Posterior vena cava (tissue), 2 donors: ENCODE measurements at regions of chr20 and their contacts with region 1.

Region 1: GRCh38 chr20:62330576-62331317 is 27.9 kb downstream of the ADRM1 start:
- DNase-seq: no peak

Region 2: DNA sequence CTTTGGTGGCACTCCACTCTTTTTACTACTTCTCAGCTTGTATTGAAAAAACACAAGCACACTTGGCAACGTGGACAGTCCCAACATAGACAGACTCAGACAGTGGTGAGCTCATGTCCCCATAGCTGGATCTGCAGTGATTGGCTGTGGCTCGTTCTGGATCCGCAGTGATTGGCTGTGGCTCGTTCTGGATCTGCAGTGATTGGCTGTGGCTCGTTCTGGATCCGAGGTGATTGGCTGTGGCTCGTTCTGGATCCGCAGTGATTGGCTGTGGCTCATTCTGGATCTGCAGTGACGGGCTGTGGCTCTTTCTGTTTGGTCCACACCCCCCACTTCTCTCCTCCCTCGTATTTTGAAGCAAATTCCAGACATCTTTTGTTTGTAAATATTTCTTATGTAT is 64.4 kb before region 1 on chr20:
- intact Hi-C with region 1: no loop called
- DNase-seq: no peak

Region 3: DNA sequence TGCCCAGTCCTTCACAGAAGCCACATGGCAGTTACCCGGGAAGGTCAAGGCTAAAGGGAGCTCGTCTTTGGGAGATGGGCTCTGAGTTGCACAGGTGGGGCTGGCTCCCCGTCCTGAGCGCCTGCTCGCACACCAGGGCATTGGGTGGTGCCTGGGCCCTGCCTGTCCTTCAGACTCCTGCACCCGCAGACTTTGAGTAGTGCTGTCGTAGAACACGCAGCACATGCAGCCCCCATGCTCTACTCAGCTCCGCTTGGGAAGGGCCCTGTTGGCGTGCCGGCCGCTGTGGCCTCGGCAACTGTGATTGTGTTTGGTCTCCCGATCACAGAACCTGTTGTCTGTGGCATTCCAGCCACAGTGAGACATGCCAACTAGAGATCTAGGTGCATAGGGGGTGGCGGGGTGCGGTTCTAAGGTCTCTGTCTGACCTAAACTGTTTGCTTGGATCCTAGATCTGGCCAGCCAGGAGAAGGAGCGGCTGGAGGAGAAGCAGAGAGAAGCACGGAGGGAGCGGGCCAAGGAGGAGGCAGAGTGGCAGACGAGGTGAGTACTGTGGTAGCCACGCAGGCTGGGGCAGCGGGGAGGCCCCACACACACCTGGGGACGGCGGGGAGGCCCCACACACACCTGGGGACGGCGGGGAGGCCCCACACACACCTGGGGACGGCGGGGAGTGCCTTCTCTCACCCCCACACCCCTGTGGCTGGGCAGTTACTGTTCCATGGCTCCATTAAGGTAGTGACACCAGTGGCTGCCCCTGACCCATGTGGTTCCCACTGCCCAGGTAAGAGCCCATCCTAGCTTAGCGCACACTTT is 39.3 kb before region 1 on chr20:
- intact Hi-C with region 1: loop called in 1 of 2 experiments (anchors 1 kb)
- DNase-seq: no peak